Gastrocnemius medialis (tissue), 4 donors: ENCODE measurements at regions of chr1 and their contacts with region 1.

Region 1: GRCh38 chr1:230599926-230600653 is 42.2 kb upstream of the COG2 start:
- DNase-seq: no peak
- ATAC-seq: no peak
- H3K4me3 ChIP-seq: no peak overlapping the region
- H3K27ac ChIP-seq: no peak overlapping the region
- H3K4me1 ChIP-seq: no peaks in the 10 kb centered on the region
- H3K27me3 ChIP-seq: no peaks in the 10 kb centered on the region
- CTCF ChIP-seq: no peak
- POLR2A ChIP-seq: no peak

Region 2: DNA sequence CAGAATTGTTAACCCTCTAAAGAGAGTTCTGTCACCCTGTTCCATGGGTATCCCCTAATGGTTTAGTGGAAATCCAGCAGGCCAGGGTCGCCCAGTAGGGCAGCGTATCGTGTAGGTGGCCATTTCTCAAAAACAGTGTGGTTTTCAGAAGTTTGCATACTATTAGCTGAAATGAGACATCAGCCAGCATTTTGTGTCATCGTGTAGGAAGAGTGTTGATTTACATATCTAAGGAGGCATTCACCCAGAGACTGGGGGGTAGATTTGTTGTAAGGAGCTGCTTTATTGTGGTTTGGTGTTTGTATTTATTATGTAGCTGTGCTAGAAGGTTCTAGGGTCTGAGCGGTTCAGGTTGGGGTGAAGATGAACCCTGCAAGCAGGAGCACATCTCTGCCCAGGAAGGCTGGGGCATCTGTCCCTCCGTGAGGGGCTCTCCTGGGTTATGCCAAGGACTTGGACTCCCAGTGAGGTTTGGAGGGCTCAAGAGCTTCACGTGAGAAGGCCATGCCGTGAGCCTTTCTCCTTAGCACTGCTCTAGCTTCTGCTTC is 348.4 kb before region 1 on chr1:
- in situ Hi-C with region 1: no loop called
- intact Hi-C with region 1: no loop called
- DNase-seq: no peak
- ATAC-seq: no peak
- H3K4me3 ChIP-seq: no peak overlapping the region
- H3K27ac ChIP-seq: no peak overlapping the region
- H3K4me1 ChIP-seq: peaks cover 6 to 9% of the 10 kb centered on the region in 2 donors
- H3K27me3 ChIP-seq: no peaks in the 10 kb centered on the region
- CTCF ChIP-seq: no peak
- POLR2A ChIP-seq: no peak

Region 3: GRCh38 chr1:230542054-230542453 is 58.0 kb before region 1 on chr1:
- in situ Hi-C with region 1: no loop called
- intact Hi-C with region 1: no loop called
- DNase-seq: no peak
- ATAC-seq: no peak
- H3K4me3 ChIP-seq: no peak overlapping the region
- H3K27ac ChIP-seq: no peak overlapping the region
- H3K4me1 ChIP-seq: no peaks in the 10 kb centered on the region
- H3K27me3 ChIP-seq: no peaks in the 10 kb centered on the region
- CTCF ChIP-seq: no peak
- POLR2A ChIP-seq: no peak

Region 4: GRCh38 chr1:230781594-230781993 is 181.5 kb after region 1 on chr1:
- in situ Hi-C with region 1: no loop called
- intact Hi-C with region 1: no loop called
- DNase-seq: no peak
- ATAC-seq: no peak
- H3K4me3 ChIP-seq: no peak overlapping the region
- H3K27ac ChIP-seq: no peak overlapping the region
- H3K4me1 ChIP-seq: no peaks in the 10 kb centered on the region
- H3K27me3 ChIP-seq: peaks cover 0 to 3% (median 0%) of the 10 kb centered on the region in 3 donors
- CTCF ChIP-seq: no peak
- POLR2A ChIP-seq: no peak

Region 5: GRCh38 chr1:231724876-231725724 is 1125.0 kb after region 1 on chr1:
- in situ Hi-C with region 1: no loop called
- intact Hi-C with region 1: loop called (anchors 5 kb)
- DNase-seq: peak in 1 of 2 donors; percentile 14
- ATAC-seq: no peak
- H3K4me3 ChIP-seq: no peak overlapping the region
- H3K27ac ChIP-seq: no peak overlapping the region
- H3K4me1 ChIP-seq: no peaks in the 10 kb centered on the region
- H3K27me3 ChIP-seq: peaks cover 0 to 4% (median 3%) of the 10 kb centered on the region in 3 donors
- CTCF ChIP-seq: no peak
- POLR2A ChIP-seq: no peak